Panc1 (cell line): ENCODE measurements at regions of chr6 and their contacts with region 1.

Region 1: GRCh38 chr6:88908598-88909548 is 54.5 kb downstream of the RNGTT start:
- DNase-seq: no peak
- ATAC-seq: no peak
- H3K4me3 ChIP-seq: no peak overlapping the region
- H3K27ac ChIP-seq: no peak overlapping the region
- H3K4me1 ChIP-seq: no peaks in the 10 kb centered on the region
- H3K27me3 ChIP-seq: no peaks in the 10 kb centered on the region
- CTCF ChIP-seq: no peak

Region 2: DNA sequence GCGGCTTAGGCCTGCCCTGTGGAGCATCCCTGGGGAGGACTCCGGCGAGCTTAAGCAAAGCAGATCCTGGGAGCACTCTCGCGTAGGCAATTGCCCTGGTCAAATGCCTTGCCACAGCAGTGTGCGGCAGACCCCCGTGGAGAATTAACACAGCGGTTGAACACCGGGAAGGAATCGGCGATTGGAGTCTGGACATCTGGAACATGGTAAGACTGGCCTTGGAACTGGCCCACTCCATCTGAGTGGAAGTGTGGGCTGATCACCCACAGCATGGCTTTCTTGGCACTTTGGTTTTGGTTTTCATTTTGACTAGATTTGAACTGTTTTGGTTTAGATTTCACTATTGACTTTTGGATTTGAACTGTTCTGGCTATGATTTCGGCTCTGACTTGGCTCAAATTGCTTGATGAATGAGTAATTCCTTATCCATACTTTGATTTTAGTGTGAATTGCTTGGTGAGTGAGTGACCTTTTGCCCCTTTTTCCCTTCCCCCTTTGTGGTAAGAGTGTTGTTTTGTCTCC is 246.2 kb before region 1 on chr6:
- CTCF ChIA-PET with region 1: no interaction called
- POLR2A ChIA-PET with region 1: interaction called, 11 read pairs
- in situ Hi-C with region 1: no loop called
- intact Hi-C with region 1: no loop called
- DNase-seq: no peak
- ATAC-seq: no peak
- H3K4me3 ChIP-seq: no peak overlapping the region
- H3K27ac ChIP-seq: no peak overlapping the region
- H3K4me1 ChIP-seq: no peaks in the 10 kb centered on the region
- H3K27me3 ChIP-seq: no peaks in the 10 kb centered on the region
- CTCF ChIP-seq: no peak

Region 3: DNA sequence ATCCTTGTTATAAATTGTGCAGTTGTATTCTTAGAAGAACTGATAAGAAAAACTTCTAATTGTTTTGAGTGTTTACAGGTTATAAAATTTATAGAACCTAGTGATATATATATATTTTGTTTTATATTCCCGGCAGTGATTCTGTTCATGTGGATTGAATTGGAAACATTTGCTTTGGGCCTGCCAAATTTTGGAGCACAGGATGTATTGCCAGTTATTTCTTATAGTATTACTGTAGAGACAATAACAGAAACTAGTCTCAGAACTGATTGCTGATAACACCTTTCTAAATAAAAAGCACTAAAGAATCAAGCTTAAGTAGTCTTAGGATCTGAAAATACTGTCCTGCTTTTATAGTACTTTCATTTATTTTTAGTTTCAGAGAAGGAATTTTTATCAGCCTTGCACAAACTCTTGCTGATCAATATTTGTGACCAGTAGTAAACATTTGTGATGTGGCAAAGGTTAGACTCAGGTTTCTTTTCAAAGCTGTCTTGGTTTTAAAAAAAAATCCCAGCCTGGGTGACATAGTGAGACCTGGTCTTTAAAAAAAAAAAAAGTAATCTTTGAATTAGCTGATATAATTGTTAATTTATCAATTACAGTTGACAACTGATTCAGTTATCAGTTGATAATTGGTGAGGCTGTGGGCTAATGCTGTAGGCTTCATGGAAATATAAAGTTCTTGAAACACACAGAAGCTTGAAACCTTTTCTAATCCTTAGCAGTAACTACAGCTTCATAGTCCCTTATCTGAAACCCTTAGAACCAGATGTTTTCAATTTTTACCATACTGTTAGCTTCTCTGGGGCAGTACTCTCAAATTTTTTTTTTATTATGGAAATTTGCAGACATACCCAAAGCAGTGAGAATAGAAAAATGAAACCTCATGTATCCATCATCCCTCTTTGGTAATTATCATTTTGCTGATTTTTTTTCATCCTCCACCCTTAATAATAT is 12.2 kb after region 1 on chr6:
- CTCF ChIA-PET with region 1: no interaction called
- POLR2A ChIA-PET with region 1: interaction called, 16 read pairs
- in situ Hi-C with region 1: no loop called
- intact Hi-C with region 1: no loop called
- DNase-seq: no peak
- ATAC-seq: no peak
- H3K4me3 ChIP-seq: no peak overlapping the region
- H3K27ac ChIP-seq: no peak overlapping the region
- H3K4me1 ChIP-seq: no peaks in the 10 kb centered on the region
- H3K27me3 ChIP-seq: no peaks in the 10 kb centered on the region
- CTCF ChIP-seq: no peak